Cardiac septum (tissue), 1 donor: ENCODE measurements at regions of chr13 and their contacts with region 1.

Region 1: GRCh38 chr13:95191821-95192563 is 109.3 kb downstream of the ABCC4 start:
- DNase-seq: peak; percentile 81

Region 2: DNA sequence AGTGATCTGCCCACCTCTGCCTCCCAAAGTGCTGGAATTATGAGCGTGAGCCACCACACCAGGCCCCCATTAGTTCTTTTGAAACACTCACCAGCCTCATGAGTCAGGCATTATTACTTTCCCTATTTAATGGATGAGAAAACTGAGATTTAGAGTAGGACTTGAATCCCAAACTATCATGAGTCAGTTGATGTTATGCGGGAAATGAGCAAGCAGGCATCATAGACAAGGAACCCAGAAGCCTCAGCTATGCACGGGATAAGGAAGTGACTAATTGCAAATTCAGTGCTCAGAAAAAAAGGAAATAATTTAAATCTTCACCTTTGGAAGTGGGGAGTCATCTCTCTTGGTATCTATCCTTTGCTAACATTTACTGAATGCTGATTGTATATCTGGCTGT is 108.2 kb before region 1 on chr13:
- intact Hi-C with region 1: no loop called
- DNase-seq: no peak

Region 3: GRCh38 chr13:95239283-95239682 is 47.3 kb after region 1 on chr13:
- intact Hi-C with region 1: no loop called
- DNase-seq: no peak

Region 4: GRCh38 chr13:95275322-95276036 is 83.5 kb after region 1 on chr13:
- intact Hi-C with region 1: loop called (anchors 5 kb)
- DNase-seq: peak; percentile 5

Region 5: GRCh38 chr13:95378603-95379002 is 186.6 kb after region 1 on chr13:
- intact Hi-C with region 1: loop called (anchors 2 kb)
- DNase-seq: no peak

Region 6: DNA sequence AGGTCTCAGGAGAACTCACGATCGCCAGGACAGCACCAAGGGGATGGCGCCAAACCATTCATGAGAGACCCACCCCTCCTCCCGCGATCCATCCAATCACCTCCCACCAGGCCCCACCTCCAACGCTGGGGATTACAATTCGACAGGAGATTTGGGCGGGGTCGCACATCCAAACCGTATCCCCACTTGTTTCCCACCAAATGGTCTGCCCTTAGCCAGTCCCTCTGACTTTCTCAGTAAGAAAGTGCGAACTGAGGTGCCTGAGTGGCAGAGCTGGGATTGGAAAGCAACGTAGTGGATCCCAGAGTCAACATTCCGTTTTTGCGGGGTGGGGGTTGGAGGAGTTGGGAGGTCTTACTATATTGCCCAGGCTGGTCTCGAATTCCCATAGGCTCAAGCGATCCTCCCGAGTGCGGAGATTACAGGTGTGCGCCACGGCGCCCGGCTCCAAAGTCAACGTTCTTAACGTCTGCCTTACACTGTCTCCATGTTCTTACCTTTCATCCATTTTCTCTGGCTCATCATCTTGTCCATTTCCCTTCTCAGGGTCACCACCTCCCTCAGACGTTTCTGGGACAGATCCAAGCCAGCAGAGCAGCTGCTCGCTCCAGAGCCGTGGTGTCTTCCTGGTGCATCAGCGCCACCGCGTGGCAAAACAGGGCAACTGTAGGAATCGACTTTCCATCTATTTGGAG is 212.0 kb after region 1 on chr13:
- intact Hi-C with region 1: loop called (anchors 2 kb)
- DNase-seq: peak; percentile 92

Region 7: DNA sequence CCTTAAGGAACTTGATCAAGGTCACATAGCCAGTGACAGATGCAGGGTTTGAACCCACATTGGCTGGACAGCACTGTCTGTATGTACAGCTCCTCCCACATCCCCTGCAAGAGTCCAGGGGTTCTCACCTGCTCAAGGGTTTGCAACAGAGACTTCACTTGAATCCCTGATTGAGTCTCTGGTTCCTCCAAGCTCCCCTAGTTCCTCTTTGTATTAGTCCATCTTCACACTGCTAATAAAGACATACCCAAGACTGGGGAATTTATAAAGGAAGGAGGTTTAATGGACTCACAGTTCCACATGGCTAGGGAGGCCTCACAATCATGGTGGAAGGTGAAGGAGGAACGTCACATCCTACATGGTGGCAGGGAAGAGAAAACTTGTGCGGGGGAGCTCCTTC is 287.7 kb after region 1 on chr13:
- intact Hi-C with region 1: loop called (anchors 10 kb)
- DNase-seq: no peak

Region 8: DNA sequence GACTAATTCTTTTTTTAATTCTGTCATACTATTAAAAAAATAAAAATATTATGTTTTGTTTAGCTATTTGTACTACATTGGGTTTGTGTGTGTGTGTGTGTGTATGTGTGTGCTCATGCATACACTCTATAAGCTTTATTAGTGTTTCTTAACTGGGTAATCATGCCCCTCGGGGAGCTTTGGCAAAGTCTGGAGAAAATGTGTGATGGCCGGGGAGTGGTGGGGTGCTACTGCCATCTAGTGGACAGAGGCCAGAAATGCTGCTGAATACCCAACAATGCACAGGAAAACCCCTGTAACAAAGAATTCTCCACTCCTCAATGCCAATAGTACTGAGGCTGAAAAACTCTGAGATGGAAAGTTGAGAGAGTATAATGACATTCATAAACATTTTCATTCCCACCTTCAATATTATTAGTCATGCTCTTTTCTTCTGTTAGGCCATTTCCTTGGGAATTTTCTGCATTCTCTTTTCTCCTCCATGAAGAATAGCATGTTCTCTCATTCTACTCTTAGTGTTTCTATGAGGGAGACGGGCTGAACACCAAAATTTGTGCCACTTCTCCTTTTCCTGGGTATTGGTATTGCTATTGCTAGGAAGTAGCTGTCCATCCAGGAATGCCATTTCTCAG is 642.3 kb after region 1 on chr13:
- intact Hi-C with region 1: loop called (anchors 5 kb)
- DNase-seq: peak; percentile 80